Head of caudate nucleus (tissue), 42 donors: ENCODE measurements at regions of chr19 and their contacts with region 1.

Region 1: DNA sequence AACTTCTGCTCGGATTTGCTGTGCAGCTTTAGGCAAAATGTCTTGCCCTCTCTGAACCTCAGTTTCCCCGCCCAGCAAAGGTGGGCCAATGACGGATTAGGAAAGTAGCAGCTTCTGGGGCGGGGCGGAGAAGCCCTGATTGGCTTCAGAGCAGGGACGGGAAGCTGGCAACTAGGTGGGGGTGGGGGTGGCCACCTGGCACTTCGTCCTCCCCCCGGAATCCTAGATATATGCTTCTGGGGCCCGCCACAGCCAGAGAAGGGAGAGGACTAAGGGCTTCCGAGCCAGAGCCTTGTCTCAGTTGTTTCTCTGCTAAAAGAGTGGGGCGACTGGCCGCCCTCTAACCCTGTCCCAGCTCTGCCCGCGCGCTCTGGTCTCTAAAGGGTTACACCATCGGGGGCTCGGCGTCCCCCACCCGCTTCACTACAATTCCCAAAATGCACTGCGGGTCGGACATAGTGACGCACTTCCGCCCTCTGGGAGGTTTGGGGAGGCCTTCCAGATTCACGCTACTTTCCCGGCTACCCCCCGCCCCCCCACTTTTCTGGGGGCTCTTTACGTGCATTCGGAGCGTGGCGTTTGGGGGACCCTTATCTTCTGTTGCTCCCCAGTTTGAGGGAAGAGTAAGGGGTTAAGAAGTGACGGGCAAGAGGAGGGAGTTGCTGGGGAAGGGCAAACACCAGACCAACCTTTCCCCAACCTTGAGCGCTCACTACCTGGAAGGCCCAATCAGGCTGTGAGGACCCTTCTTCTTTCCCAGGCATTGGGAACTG is 672 bp upstream of the IRF2BP1 start:
- DNase-seq: peak; percentile 81 to 97 (median 92)

Region 2: DNA sequence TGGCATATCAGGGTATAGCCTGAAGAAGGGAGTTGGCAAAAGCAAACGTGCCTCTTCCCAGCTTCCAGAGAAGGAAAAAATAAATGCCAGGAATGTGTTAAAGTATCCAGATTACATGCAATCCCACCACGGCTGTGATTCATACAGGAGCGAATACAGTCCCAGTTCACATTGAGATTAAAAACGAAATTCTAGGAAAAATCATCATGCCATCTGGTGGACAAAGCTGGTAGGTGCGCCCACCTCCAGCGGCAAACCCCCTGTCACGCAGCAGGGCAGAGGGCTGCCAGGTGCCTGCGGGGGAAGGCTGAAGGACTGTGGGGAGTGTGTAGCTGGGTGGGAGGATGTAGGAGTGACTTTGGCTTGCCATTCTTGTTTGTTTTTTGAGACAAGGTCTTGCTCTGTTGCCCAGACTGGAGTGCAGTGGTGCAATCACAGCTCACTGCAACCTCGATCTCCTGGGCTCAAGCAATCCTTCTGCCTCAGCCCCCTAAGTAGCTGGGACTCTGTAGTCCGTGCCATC is 87.6 kb before region 1 on chr19:
- intact Hi-C with region 1: no loop called
- DNase-seq: peak in 38 of 42 donors; percentile 34 to 87 (median 64)

Region 3: DNA sequence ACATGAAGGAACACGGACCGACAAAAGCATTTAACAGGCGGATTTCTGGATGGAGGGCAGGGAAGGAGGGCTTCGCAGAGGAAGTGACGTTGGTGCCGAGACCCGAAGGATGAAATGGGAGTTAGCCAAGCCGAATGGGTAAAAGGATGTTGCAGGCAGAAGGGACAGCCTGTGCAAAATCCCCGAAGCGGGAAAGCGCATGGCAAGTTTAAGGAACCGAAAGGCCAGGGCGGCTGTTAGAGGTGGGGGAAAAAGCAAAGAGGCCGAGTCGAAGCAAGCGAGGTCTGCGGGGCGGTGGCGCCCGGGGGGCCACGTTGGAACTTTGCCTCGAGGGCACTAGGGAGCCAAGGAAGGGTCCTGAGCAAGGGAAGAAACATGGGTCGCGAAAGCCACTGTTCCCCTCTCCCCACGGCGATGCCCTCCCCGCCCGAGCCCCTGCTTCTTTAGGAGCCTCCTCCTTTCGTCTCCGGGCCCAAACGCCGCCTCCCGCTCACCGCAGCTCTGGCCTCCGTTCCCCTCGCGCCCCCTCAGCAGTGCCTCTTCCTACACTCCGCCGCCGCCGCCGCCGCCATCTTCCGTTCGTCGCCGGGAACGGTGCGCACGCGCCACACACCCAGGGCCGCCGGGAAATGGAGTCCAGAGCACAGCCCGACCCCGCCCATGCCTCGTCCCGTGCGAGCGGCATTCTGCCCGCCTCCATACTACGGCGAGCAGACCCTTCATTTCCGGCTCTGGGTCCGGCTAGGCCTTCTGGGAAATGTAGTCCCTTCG is 23.9 kb before region 1 on chr19 and contains the start of gene SYMPK:
- intact Hi-C with region 1: loop called (anchors 2 kb)
- DNase-seq: peak; percentile 98 to 100 (median 99)

Region 4: DNA sequence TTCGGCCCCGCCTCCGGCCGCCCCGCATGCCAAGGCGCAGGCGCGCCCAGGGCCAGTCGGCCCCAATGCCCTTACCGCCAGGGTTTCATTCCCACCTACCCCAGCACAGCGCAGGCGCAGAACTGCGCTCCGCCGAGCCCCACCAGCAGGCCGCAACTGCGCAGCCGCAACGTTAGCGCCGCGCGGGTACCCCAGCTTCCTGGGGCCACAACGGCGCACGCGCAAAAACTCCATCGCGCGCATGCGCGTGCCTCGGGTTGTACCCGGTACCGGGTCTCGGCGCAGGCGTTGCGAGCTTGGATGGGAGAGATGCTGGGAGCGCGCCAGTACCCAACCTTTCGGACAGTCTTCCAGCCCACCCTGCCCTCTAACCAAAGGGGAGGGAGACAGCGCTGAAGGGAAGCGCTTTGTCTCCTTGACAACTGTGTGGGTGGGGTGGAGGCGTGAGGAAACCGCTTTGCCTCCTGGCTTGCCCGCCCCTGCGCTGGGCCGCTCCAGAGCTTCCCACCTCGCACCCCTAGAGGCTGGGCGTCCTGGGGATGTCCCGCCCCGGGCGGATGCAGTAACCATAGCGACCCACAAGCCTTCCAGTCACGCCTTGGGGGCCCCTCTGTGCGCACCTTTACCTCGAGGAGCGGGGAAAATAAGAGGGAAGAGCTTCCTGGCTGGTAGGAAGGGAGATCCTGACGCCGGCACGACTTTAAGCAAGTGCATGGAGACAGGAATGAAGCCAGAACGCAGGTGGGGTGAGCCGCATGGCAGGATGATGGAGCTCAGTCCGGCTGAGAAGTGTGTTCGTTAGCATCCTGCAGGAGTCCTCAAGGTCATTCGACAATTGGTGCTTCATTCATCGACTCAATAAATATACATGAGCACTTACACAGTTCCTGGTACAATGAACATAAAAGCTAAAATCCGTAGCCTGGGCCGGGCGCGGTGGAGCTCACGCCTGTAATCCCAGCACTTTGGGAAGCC is 16.3 kb after region 1 on chr19:
- intact Hi-C with region 1: loop called (anchors 1 kb)
- DNase-seq: peak; percentile 88 to 99 (median 97)

Region 5: GRCh38 chr19:45927565-45928261 is 41.1 kb after region 1 on chr19:
- intact Hi-C with region 1: no loop called
- DNase-seq: peak; percentile 84 to 97 (median 92)

Region 6: DNA sequence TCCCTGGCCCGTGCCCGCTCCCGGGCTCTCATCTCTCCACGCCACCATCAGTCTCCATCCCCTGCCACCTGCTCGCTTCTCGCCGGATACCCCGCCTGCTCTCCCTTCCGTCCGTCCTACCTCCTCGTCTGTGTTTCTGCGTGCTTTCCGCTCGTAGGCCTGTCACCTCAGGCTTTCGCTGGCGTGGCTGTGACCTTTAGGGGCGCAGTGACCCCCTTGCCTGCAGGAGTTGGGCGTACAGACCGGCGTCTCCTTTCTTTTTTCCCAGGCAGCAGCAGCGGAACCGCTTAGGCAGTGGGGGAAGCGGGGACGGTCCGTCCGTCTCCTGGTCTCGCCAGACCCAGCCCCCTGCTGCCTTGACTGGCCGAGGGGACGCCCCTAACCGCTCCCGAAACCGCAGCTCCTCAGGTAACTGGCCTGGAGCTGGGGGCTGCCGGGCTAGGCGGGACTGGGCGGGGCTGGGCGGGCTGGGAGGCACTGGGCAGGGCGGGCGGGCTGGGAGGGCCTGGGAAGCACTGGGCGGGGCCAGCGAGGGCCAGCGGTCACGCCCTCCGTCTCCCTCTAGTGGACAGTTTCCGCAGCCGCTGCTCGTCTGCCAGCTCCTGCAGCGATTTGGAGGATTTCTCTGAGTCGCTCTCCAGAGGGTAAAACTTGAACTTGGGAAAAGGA is 129.9 kb after region 1 on chr19:
- intact Hi-C with region 1: loop called (anchors 10 kb)
- DNase-seq: peak in 41 of 42 donors; percentile 52 to 92 (median 82)